ENCODE measurements at regions of chr4 and their contacts with region 1.

Region 1: DNA sequence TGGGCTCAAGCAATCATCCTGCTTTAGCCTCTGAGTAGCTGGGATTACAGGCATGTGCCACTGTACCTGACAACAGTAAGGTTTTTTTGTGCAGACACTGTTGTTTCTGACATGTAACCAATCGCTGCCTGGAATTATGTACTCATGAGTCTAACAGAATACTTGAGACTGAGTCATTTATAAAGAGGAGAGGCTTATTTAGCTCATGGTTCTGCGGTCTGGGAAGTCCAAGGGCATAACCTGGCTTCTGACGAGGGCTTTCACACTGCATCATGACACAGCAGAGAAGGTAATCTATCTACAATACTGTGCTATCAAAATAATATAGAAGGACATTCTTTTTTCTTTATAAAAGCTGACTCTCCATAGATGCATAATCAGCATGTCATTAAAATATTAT is 115.5 kb upstream of the STOX2 start:
- DNase-seq: no peak
- ATAC-seq: no peak
- H3K4me3 Mint-ChIP-seq: no peak overlapping the region
- H3K27ac Mint-ChIP-seq: no peak overlapping the region
- H3K4me1 Mint-ChIP-seq: no peaks in the 10 kb centered on the region
- H3K27me3 Mint-ChIP-seq: peaks cover 30% of the 10 kb centered on the region

Region 2: GRCh38 chr4:183738081-183738673 is 51.5 kb before region 1 on chr4:
- CTCF ChIA-PET with region 1: no interaction called
- POLR2A ChIA-PET with region 1: interaction called, 10 read pairs
- intact Hi-C with region 1: no loop called
- DNase-seq: no peak
- ATAC-seq: no peak
- H3K4me3 Mint-ChIP-seq: no peak overlapping the region
- H3K27ac Mint-ChIP-seq: no peak overlapping the region
- H3K4me1 Mint-ChIP-seq: no peaks in the 10 kb centered on the region
- H3K27me3 Mint-ChIP-seq: no peaks in the 10 kb centered on the region